ENCODE measurements at regions of chr18 and their contacts with region 1.

Region 1: GRCh38 chr18:76875390-76876325 is 53.3 kb downstream of the ZNF236 start:
- DNase-seq: peak; percentile 34
- H3K4me3 ChIP-seq: no peak overlapping the region
- H3K27ac ChIP-seq: no peak overlapping the region
- H3K4me1 ChIP-seq: no peaks in the 10 kb centered on the region
- CTCF ChIP-seq: peak; percentile 78

Region 2: DNA sequence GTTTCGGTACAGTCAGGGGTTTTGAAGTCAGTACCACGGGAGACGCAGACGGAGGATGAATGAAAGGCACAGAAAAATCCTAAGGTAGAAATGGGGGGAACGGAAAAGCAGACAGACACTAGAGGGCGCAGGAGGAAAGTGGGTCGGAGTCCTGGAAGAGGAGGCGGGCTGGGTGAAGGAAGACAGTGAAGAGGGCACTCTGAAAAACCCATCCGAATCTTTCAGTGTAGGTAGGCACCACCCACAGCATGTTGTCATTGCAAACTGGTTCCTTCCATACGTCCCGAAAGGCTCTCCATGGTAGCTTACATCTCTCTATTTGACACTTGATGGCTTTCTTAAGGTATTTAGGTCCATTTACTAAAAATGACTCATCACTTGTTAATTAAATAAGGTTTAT is 71.8 kb before region 1 on chr18:
- CTCF ChIA-PET with region 1: no interaction called
- POLR2A ChIA-PET with region 1: interaction called, 5 read pairs
- intact Hi-C with region 1: loop called (anchors 5 kb)
- DNase-seq: peak; percentile 56
- H3K4me3 ChIP-seq: no peak overlapping the region
- H3K27ac ChIP-seq: no peak overlapping the region
- H3K4me1 ChIP-seq: peaks cover 3% of the 10 kb centered on the region
- CTCF ChIP-seq: peak; percentile 79

Region 3: GRCh38 chr18:77147418-77147852 is 271.8 kb after region 1 on chr18:
- CTCF ChIA-PET with region 1: no interaction called
- POLR2A ChIA-PET with region 1: no interaction called
- intact Hi-C with region 1: no loop called
- DNase-seq: no peak
- H3K4me3 ChIP-seq: no peak overlapping the region
- H3K27ac ChIP-seq: no peak overlapping the region
- H3K4me1 ChIP-seq: peaks cover 16% of the 10 kb centered on the region
- CTCF ChIP-seq: no peak

Measured in OCI-LY7 (cell line).